ENCODE measurements at regions of chr6 and their contacts with region 1.

Region 1: GRCh38 chr6:29649701-29650673 is 6.9 kb upstream of the MOG start:
- DNase-seq: peak; percentile 98 to 99 (median 98)
- ATAC-seq: peak; percentile 95 to 98 (median 97)
- H3K4me3 ChIP-seq: peak overlapping the region in 11 of 12 donors; percentile 44 to 82 (median 68)
- H3K27ac ChIP-seq: peak overlapping the region; percentile 92 to 98 (median 96)
- H3K4me1 ChIP-seq: peaks cover 0 to 15% (median 5%) of the 10 kb centered on the region in 12 donors
- H3K27me3 ChIP-seq: peaks cover 0 to 2% (median 0%) of the 10 kb centered on the region in 9 donors
- CTCF ChIP-seq: peak; percentile 84 to 97 (median 94)
- POLR2A ChIP-seq: peak; percentile 35 to 89

Region 2: DNA sequence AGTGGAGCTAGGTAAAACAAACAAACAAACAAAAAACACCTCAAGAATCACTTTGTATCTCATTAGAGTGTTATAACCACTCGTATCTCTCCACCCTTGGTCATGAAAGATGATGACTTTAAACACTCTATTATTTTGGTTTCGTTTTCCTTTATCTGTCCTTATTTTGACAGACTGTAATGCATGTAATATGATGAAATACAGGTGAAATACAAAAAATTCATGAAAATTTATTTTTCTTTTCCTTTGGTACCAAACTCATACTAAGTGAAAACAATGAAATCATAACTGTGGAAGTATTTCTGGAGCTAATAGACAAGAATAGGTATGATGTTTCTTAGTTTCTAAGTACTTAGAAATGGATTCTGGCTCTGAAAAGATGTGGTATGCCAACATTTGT is 250.5 kb before region 1 on chr6:
- intact Hi-C with region 1: no loop called
- DNase-seq: no peak
- ATAC-seq: no peak
- H3K4me3 ChIP-seq: no peak overlapping the region
- H3K27ac ChIP-seq: no peak overlapping the region
- H3K4me1 ChIP-seq: no peaks in the 10 kb centered on the region
- H3K27me3 ChIP-seq: peaks cover 0 to 11% (median 0%) of the 10 kb centered on the region in 9 donors
- CTCF ChIP-seq: no peak
- POLR2A ChIP-seq: no peak

Region 3: DNA sequence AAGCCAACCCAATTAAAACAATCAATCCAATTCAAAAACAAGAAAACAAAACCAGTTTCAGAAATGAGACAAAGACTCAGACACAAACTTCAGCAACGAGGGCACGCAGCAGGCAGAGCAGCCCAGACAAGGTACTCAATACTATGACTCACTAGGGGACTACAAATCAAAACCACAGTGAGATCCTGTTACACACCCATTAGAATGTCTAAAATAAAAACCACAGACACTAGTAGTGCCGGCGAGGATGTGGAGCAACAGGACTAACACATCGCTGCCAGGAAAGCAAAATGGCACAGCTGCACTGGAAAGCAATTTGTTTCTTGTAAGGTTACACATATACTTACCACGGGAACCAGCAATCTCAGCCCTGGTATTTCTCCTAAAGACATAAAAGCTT is 133.9 kb before region 1 on chr6:
- intact Hi-C with region 1: no loop called
- DNase-seq: no peak
- ATAC-seq: no peak
- H3K4me3 ChIP-seq: no peak overlapping the region
- H3K27ac ChIP-seq: no peak overlapping the region
- H3K4me1 ChIP-seq: no peaks in the 10 kb centered on the region
- H3K27me3 ChIP-seq: peaks cover 0 to 2% (median 0%) of the 10 kb centered on the region in 9 donors
- CTCF ChIP-seq: no peak
- POLR2A ChIP-seq: no peak

Region 4: DNA sequence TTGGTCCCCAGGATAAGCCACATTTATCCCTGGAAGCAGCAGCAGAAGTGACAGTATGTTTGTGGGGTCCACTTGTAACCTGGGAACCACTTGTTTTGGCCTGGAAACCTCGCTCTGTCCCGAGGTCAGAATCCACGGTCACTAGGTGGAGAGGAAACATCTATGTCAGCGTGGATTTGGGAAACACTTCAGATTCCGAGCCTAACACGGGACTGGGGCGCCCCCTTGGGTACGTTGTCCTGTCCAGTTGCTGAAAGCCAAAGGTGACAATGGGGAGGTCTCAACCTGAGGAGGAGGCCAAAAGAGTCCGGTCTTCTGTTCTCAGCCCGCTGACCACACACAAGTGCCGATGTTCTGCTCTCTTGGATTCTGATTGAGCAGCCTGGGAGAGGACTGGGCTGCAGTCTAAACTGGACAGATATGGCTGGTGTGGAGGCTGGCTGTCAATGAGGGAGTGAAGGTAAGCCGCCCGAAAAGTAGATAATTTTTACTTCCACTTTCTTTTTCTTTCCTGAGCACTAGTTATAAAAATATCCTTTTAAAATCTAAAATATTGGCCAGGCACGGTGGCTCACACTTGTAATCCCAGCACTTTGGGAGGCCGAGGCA is 35.8 kb after region 1 on chr6:
- intact Hi-C with region 1: loop called in 6 of 10 experiments (anchors 2 to 5 kb)
- DNase-seq: peak in 2 of 5 donors; percentile 44 to 59
- ATAC-seq: peak in 3 of 4 donors; percentile 63 to 82 (median 80)
- H3K4me3 ChIP-seq: no peak overlapping the region
- H3K27ac ChIP-seq: no peak overlapping the region
- H3K4me1 ChIP-seq: no peaks in the 10 kb centered on the region
- H3K27me3 ChIP-seq: peaks cover 0 to 4% (median 0%) of the 10 kb centered on the region in 9 donors
- CTCF ChIP-seq: peak in 9 of 12 donors; percentile 19 to 51 (median 33)
- POLR2A ChIP-seq: no peak

Region 5: GRCh38 chr6:29696155-29697125 is 46.5 kb after region 1 on chr6:
- intact Hi-C with region 1: loop called in 3 of 10 experiments (anchors 2 to 5 kb)
- DNase-seq: peak in 1 of 5 donors; percentile 51
- ATAC-seq: peak in 3 of 4 donors; percentile 57 to 73 (median 70)
- H3K4me3 ChIP-seq: no peak overlapping the region
- H3K27ac ChIP-seq: no peak overlapping the region
- H3K4me1 ChIP-seq: peaks cover 0 to 3% (median 0%) of the 10 kb centered on the region in 12 donors
- H3K27me3 ChIP-seq: peaks cover 0 to 8% (median 0%) of the 10 kb centered on the region in 9 donors
- CTCF ChIP-seq: peak in 11 of 12 donors; percentile 25 to 57 (median 41)
- POLR2A ChIP-seq: no peak

Measured in heart left ventricle (tissue), 16 donors.